MCF 10A (cell line): ENCODE measurements at regions of chrX and their contacts with region 1.

Region 1: DNA sequence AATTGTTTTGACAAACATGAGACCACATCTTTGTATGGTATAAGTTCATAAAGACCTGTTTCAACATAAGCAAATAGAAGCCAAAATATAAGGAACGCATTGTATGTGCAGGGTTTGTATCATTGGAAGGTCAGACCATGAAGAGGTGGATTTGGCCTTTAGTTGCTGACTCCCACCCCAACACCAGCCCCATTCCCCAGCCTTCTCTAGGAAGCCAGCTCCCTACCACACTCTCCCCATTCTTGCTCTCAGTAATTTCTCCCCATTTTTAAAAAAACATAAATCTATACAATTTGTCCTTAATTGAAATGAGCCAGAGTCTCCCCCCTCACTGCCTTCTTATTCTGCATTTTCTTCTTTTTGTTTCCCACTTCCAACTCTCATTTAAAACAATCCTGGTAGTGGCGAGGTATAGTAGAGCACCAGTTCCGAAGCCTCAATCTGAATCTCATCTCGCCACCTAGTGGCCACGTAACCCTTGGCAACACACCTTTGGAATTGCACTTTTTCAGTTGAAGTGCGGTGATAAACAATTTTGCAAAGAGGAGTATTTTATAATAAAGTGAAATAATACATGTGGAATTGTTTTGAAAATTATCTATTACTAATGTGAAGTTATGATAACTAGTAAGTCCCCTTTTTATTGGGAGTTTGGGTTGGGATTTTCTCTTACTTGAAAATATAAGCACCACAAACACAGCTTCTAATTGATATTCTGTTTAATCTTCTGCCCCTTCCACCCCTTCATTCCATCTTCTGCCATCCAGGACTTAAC is 126.6 kb downstream of the ASB9 start:
- DNase-seq: peak; percentile 67
- H3K4me3 Mint-ChIP-seq: no peak overlapping the region
- H3K27ac Mint-ChIP-seq: no peak overlapping the region
- H3K4me1 Mint-ChIP-seq: no peaks in the 10 kb centered on the region
- H3K27me3 Mint-ChIP-seq: peaks cover 70% of the 10 kb centered on the region
- CTCF ChIP-seq: peak; percentile 74

Region 2: DNA sequence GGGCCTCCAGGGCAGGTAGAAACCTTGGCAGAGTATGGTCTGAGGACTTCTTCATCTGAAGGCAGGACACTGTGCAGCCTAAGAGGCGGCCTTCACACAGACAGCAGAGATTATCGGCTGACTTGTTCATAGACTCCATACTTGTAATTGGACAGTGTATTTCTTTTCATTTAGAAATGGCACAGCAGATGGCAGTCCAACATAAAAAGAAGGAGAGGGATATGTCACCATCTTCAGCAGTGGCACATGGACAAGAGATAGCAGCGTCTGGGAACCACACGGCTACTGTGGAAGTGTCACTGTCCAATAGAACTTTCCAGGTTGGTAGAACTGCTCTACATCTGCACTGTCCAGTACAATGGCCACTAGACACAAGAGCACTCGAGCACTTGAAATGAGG is 1091.8 kb before region 1 on chrX:
- CTCF ChIA-PET with region 1: interaction called, 4 read pairs
- POLR2A ChIA-PET with region 1: no interaction called
- intact Hi-C with region 1: loop called (anchors 5 kb)
- DNase-seq: no peak
- H3K4me3 Mint-ChIP-seq: no peak overlapping the region
- H3K27ac Mint-ChIP-seq: no peak overlapping the region
- H3K4me1 Mint-ChIP-seq: no peaks in the 10 kb centered on the region
- H3K27me3 Mint-ChIP-seq: peaks cover 96% of the 10 kb centered on the region
- CTCF ChIP-seq: no peak

Region 3: DNA sequence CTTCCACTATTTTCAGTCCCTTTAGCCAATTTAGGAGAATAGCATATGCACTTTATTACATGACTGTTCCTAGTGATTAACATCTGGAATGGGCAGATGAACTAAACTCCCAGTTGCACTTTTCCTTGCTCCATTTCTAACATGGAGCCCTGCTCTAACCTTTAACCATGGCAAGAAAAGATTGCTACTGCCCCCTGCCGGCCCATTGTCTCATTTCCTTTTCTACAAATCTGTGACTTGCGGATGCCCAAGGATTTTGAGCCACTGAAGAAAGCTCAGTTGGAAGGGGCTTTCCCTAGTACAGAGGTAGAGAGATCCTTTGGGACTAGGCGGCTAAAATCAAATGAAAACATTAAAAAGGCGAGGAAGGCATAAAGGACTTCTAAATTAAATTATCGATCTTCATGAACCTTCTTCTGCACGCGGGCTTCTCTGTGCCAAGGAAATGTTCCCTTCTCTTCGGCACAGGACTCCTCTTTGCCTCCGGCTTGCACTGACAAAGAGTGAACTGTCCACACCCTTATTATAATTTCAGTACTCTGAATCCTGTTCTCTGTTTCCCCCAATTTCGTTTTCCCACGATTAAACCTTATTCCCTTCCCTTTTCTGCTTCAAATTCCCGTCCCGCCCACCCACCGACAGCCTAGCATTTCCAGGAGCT is 614.5 kb before region 1 on chrX:
- CTCF ChIA-PET with region 1: no interaction called
- POLR2A ChIA-PET with region 1: interaction called, 3 read pairs
- intact Hi-C with region 1: loop called (anchors 2 kb)
- DNase-seq: peak; percentile 74
- H3K4me3 Mint-ChIP-seq: peak overlapping the region; percentile 61
- H3K27ac Mint-ChIP-seq: no peak overlapping the region
- H3K4me1 Mint-ChIP-seq: peaks cover 5% of the 10 kb centered on the region
- H3K27me3 Mint-ChIP-seq: peaks cover 15% of the 10 kb centered on the region
- CTCF ChIP-seq: peak; percentile 55

Region 4: DNA sequence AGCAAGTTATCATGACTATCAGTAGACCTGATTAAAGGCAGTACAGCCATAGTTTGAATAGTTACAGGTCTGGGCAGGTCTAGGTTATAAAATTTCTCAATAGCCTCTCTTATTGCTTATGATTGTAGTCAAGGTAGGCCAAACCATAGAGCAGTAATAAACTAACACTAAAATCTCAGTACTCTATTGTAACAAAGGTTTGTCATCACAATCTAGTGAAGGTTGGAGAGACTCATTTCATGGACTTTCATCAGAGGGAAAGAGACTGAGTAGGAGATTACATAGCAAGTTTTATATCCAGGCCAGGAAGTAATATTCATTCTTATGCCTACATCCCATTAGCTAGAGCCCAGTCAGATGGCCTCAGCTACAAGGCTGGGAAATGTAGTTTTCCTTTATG is 14.4 kb before region 1 on chrX:
- CTCF ChIA-PET with region 1: interaction called, 30 read pairs
- POLR2A ChIA-PET with region 1: no interaction called
- intact Hi-C with region 1: no loop called
- DNase-seq: no peak
- H3K4me3 Mint-ChIP-seq: no peak overlapping the region
- H3K27ac Mint-ChIP-seq: no peak overlapping the region
- H3K4me1 Mint-ChIP-seq: no peaks in the 10 kb centered on the region
- H3K27me3 Mint-ChIP-seq: peaks cover 26% of the 10 kb centered on the region
- CTCF ChIP-seq: no peak

Region 5: GRCh38 chrX:15242899-15243555 is 99.8 kb after region 1 on chrX:
- CTCF ChIA-PET with region 1: interaction called, 15 read pairs
- POLR2A ChIA-PET with region 1: no interaction called
- intact Hi-C with region 1: loop called (anchors 1 kb)
- DNase-seq: peak; percentile 68
- H3K4me3 Mint-ChIP-seq: no peak overlapping the region
- H3K27ac Mint-ChIP-seq: no peak overlapping the region
- H3K4me1 Mint-ChIP-seq: no peaks in the 10 kb centered on the region
- H3K27me3 Mint-ChIP-seq: peaks cover under 1% of the 10 kb centered on the region
- CTCF ChIP-seq: peak; percentile 52